GM12878 (cell line): ENCODE measurements at regions of chr22 and their contacts with region 1.

Region 1: GRCh38 chr22:22156716-22157347 is 87.8 kb upstream of the VPREB1 start:
- DNase-seq: peak; percentile 59
- ATAC-seq: peak; percentile 94
- H3K4me3 ChIP-seq: no peak overlapping the region
- H3K27ac ChIP-seq: peak overlapping the region; percentile 86
- H3K4me1 ChIP-seq: peaks cover 10% of the 10 kb centered on the region
- H3K27me3 ChIP-seq: no peaks in the 10 kb centered on the region
- CTCF ChIP-seq: peak; percentile 67 to 79 (median 75)
- EP300 ChIP-seq: 0 out of 4 replicates have a peak, but pooled peaks of 1 of the 2 experiments have one; percentile 23
- POLR2A ChIP-seq: peak; percentile 41
- RAD21 ChIP-seq: peak; percentile 80

Region 2: GRCh38 chr22:22103078-22103875 is 53.6 kb before region 1 on chr22:
- CTCF ChIA-PET with region 1: interaction called, 31 read pairs
- POLR2A ChIA-PET with region 1: interaction called, 8 read pairs
- RAD21 ChIA-PET with region 1: interaction called, 15 read pairs
- SMC1A ChIA-PET with region 1: interaction called, 26 read pairs
- in situ Hi-C with region 1: no loop called
- intact Hi-C with region 1: no loop called
- DNase-seq: no peak
- ATAC-seq: 0 out of 3 replicates have a peak, but pooled peaks have one; percentile 18
- H3K4me3 ChIP-seq: no peak overlapping the region
- H3K27ac ChIP-seq: no peak overlapping the region
- H3K4me1 ChIP-seq: peaks cover 9% of the 10 kb centered on the region
- H3K27me3 ChIP-seq: no peaks in the 10 kb centered on the region
- CTCF ChIP-seq: peak; percentile 17 to 60 (median 30); a peak in 5 of 6 replicates
- EP300 ChIP-seq: no peak
- POLR2A ChIP-seq: no peak
- RAD21 ChIP-seq: no peak

Region 3: DNA sequence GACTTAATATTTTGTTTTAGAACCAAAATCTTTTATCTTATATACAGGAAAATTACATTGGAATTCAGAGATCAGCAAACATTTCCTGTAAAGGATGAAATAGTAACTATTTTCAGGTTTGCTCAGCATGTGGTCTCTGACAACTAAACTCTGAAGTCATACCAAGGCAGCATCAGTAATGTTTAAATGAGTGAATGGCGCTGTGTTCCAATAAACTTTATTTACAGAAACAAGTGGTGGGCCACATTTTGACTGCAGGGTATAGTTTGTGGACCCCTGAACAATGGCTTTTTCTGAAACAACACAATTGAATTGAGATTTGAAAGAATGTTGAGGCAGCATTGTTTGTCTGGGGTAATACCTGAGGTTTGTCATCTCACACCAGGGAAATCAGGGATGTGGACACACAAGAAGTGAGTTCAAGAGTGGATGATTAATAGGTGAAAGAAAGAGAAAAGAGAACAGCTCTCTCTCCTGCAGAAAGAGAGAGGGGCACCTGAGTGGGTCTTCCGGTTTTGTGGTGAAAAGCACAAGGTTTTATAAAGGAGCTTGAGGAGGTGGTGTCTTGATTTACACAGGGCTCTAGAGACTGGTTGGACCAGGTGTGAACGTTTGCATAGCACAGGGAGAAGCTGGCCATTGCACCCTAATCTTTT is 25.8 kb before region 1 on chr22:
- CTCF ChIA-PET with region 1: interaction called, 13 read pairs
- POLR2A ChIA-PET with region 1: no interaction called
- RAD21 ChIA-PET with region 1: no interaction called
- SMC1A ChIA-PET with region 1: interaction called, 10 read pairs
- in situ Hi-C with region 1: no loop called
- intact Hi-C with region 1: no loop called
- DNase-seq: no peak
- ATAC-seq: peak; percentile 50
- H3K4me3 ChIP-seq: no peak overlapping the region
- H3K27ac ChIP-seq: no peak overlapping the region
- H3K4me1 ChIP-seq: no peaks in the 10 kb centered on the region
- H3K27me3 ChIP-seq: no peaks in the 10 kb centered on the region
- CTCF ChIP-seq: no peak
- EP300 ChIP-seq: no peak
- POLR2A ChIP-seq: no peak
- RAD21 ChIP-seq: no peak

Region 4: GRCh38 chr22:22144858-22145257 is 12.0 kb before region 1 on chr22:
- CTCF ChIA-PET with region 1: interaction called, 12 read pairs
- POLR2A ChIA-PET with region 1: no interaction called
- RAD21 ChIA-PET with region 1: no interaction called
- SMC1A ChIA-PET with region 1: interaction called, 4 read pairs
- in situ Hi-C with region 1: no loop called
- intact Hi-C with region 1: no loop called
- DNase-seq: no peak
- ATAC-seq: no peak
- H3K4me3 ChIP-seq: no peak overlapping the region
- H3K27ac ChIP-seq: no peak overlapping the region
- H3K4me1 ChIP-seq: no peaks in the 10 kb centered on the region
- H3K27me3 ChIP-seq: no peaks in the 10 kb centered on the region
- CTCF ChIP-seq: peak in 1 of 3 experiments; percentile 12; a peak in 1 of 6 replicates
- EP300 ChIP-seq: no peak
- POLR2A ChIP-seq: no peak
- RAD21 ChIP-seq: no peak

Region 5: DNA sequence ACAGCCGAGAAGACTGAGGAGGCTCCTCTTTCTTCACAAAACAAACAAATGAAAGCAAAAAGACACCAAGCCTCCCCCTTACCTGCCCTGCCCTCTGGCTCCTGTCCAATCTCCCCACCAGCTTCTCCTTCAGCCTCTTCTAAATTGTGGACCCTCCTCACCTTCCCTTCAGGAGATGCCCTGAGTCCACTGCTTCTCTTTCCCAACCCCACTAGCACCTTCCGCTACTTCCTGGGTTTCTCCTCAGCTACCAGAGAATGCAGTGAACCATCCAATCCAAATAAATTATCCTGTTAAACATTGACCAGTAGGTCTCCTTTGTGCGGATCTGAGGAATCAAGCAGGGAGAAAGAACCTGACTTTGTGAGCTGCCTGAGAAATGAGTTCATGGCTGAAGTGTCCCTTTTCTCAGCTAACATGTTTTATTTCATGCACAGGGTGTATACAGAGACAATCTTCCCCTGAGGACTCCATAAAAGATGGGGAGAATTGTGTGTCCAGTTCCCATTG is 24.6 kb after region 1 on chr22:
- CTCF ChIA-PET with region 1: interaction called, 17 read pairs
- POLR2A ChIA-PET with region 1: interaction called, 4 read pairs
- RAD21 ChIA-PET with region 1: interaction called, 7 read pairs
- SMC1A ChIA-PET with region 1: interaction called, 11 read pairs
- in situ Hi-C with region 1: no loop called
- intact Hi-C with region 1: no loop called
- DNase-seq: no peak
- ATAC-seq: no peak
- H3K4me3 ChIP-seq: no peak overlapping the region
- H3K27ac ChIP-seq: no peak overlapping the region
- H3K4me1 ChIP-seq: peaks cover 3% of the 10 kb centered on the region; the same call in 1 of the 2 replicates
- H3K27me3 ChIP-seq: no peaks in the 10 kb centered on the region
- CTCF ChIP-seq: no peak
- EP300 ChIP-seq: no peak
- POLR2A ChIP-seq: no peak
- RAD21 ChIP-seq: no peak

Region 6: DNA sequence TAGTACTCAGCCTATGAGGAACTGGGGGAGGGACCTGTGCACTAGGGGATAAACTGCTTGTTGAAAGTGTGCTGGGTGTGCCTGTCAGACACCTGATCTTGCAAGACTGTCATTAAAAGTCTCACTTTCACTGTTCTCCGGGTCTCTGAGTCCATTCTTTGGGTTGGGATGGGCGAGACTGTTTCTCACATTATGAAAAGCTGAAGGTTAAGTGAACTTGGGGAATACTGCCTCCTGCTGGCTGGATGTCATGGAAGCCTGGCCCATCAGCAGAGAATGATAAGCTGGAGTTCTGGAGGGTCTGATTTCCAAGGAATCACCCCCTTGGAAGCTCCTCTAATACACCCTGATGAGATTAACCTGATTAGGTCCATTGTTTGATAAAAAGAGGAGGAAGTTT is 78.7 kb after region 1 on chr22:
- CTCF ChIA-PET with region 1: interaction called, 13 read pairs
- POLR2A ChIA-PET with region 1: no interaction called
- RAD21 ChIA-PET with region 1: interaction called, 3 read pairs
- SMC1A ChIA-PET with region 1: interaction called, 19 read pairs
- in situ Hi-C with region 1: no loop called
- intact Hi-C with region 1: loop called (anchors 1 kb)
- DNase-seq: peak; percentile 17
- ATAC-seq: peak; percentile 48; the same call in 2 of the 3 replicates
- H3K4me3 ChIP-seq: no peak overlapping the region
- H3K27ac ChIP-seq: no peak overlapping the region
- H3K4me1 ChIP-seq: no peaks in the 10 kb centered on the region
- H3K27me3 ChIP-seq: no peaks in the 10 kb centered on the region
- CTCF ChIP-seq: peak; percentile 51 to 55 (median 52); a peak in 5 of 6 replicates
- EP300 ChIP-seq: no peak
- POLR2A ChIP-seq: no peak
- RAD21 ChIP-seq: peak; percentile 62

Region 7: GRCh38 chr22:22942511-22943329 is 785.9 kb after region 1 on chr22:
- CTCF ChIA-PET with region 1: interaction called, 18 read pairs
- POLR2A ChIA-PET with region 1: interaction called, 3 read pairs
- RAD21 ChIA-PET with region 1: interaction called, 5 read pairs
- SMC1A ChIA-PET with region 1: interaction called, 6 read pairs
- in situ Hi-C with region 1: no loop called
- intact Hi-C with region 1: no loop called
- DNase-seq: peak; percentile 78
- ATAC-seq: peak; percentile 89
- H3K4me3 ChIP-seq: no peak overlapping the region
- H3K27ac ChIP-seq: peak overlapping the region; percentile 92
- H3K4me1 ChIP-seq: peaks cover 90% of the 10 kb centered on the region
- H3K27me3 ChIP-seq: no peaks in the 10 kb centered on the region
- CTCF ChIP-seq: peak; percentile 84 to 96 (median 87)
- EP300 ChIP-seq: 0 out of 4 replicates have a peak, but pooled peaks of 1 of the 2 experiments have one; percentile 61
- POLR2A ChIP-seq: no peak; the same call in 1 of the 2 replicates
- RAD21 ChIP-seq: peak; percentile 94